ENCODE measurements at regions of chr6 and their contacts with region 1.

Region 1: GRCh38 chr6:109382576-109383437 is 540 bp upstream of the CD164 start:
- DNase-seq: peak; percentile 97
- H3K4me3 Mint-ChIP-seq: peak overlapping the region; percentile 96
- H3K27ac Mint-ChIP-seq: peak overlapping the region; percentile 99
- H3K4me1 Mint-ChIP-seq: peaks cover 30% of the 10 kb centered on the region
- H3K27me3 Mint-ChIP-seq: peaks cover 4% of the 10 kb centered on the region

Region 2: GRCh38 chr6:108260809-108261569 is 1121.8 kb before region 1 on chr6 and contains the start of gene SNX3:
- intact Hi-C with region 1: loop called (anchors 2 kb)
- DNase-seq: peak; percentile 97
- H3K4me3 Mint-ChIP-seq: peak within 1 kb of the TSS; percentile 86
- H3K27ac Mint-ChIP-seq: peak within 1 kb of the TSS; percentile 89
- H3K4me1 Mint-ChIP-seq: peaks cover 18% of the 10 kb centered on the region
- H3K27me3 Mint-ChIP-seq: peaks cover 9% of the 10 kb centered on the region
- total RNA-seq, gene SNX3: 75.1 and 78.0 TPM in 2 replicates

Region 3: GRCh38 chr6:109009236-109009961 is 373.4 kb before region 1 on chr6:
- intact Hi-C with region 1: loop called (anchors 2 kb)
- DNase-seq: peak; percentile 98
- H3K4me3 Mint-ChIP-seq: peak overlapping the region; percentile 93
- H3K27ac Mint-ChIP-seq: peak overlapping the region; percentile 92
- H3K4me1 Mint-ChIP-seq: peaks cover 35% of the 10 kb centered on the region
- H3K27me3 Mint-ChIP-seq: peaks cover 2% of the 10 kb centered on the region

Region 4: GRCh38 chr6:109236115-109237076 is 146.4 kb before region 1 on chr6:
- intact Hi-C with region 1: loop called (anchors 2 kb)
- DNase-seq: peak; percentile 83
- H3K4me3 Mint-ChIP-seq: peak overlapping the region; percentile 51
- H3K27ac Mint-ChIP-seq: peak overlapping the region; percentile 88
- H3K4me1 Mint-ChIP-seq: peaks cover 21% of the 10 kb centered on the region
- H3K27me3 Mint-ChIP-seq: no peaks in the 10 kb centered on the region

Region 5: GRCh38 chr6:109455502-109456282 is 72.9 kb after region 1 on chr6 and contains the start of gene MICAL1:
- intact Hi-C with region 1: loop called (anchors 2 kb)
- DNase-seq: peak; percentile 93
- H3K4me3 Mint-ChIP-seq: peak within 1 kb of the TSS; percentile 98
- H3K27ac Mint-ChIP-seq: peak within 1 kb of the TSS; percentile 95
- H3K4me1 Mint-ChIP-seq: peaks cover 61% of the 10 kb centered on the region
- H3K27me3 Mint-ChIP-seq: no peaks in the 10 kb centered on the region
- total RNA-seq, gene MICAL1: 41.4 and 42.5 TPM in 2 replicates

Region 6: GRCh38 chr6:110179401-110180227 is 796.8 kb after region 1 on chr6 and contains the start of gene WASF1:
- intact Hi-C with region 1: loop called (anchors 5 kb)
- DNase-seq: peak; percentile 97
- H3K4me3 Mint-ChIP-seq: peak within 1 kb of the TSS; percentile 81
- H3K27ac Mint-ChIP-seq: peak within 1 kb of the TSS; percentile 60
- H3K4me1 Mint-ChIP-seq: peaks cover 5% of the 10 kb centered on the region
- H3K27me3 Mint-ChIP-seq: peaks cover 19% of the 10 kb centered on the region
- total RNA-seq, gene WASF1: 1.2 and 2.2 TPM in 2 replicates